Panc1 (cell line): ENCODE measurements at regions of chr11 and their contacts with region 1.

Region 1: DNA sequence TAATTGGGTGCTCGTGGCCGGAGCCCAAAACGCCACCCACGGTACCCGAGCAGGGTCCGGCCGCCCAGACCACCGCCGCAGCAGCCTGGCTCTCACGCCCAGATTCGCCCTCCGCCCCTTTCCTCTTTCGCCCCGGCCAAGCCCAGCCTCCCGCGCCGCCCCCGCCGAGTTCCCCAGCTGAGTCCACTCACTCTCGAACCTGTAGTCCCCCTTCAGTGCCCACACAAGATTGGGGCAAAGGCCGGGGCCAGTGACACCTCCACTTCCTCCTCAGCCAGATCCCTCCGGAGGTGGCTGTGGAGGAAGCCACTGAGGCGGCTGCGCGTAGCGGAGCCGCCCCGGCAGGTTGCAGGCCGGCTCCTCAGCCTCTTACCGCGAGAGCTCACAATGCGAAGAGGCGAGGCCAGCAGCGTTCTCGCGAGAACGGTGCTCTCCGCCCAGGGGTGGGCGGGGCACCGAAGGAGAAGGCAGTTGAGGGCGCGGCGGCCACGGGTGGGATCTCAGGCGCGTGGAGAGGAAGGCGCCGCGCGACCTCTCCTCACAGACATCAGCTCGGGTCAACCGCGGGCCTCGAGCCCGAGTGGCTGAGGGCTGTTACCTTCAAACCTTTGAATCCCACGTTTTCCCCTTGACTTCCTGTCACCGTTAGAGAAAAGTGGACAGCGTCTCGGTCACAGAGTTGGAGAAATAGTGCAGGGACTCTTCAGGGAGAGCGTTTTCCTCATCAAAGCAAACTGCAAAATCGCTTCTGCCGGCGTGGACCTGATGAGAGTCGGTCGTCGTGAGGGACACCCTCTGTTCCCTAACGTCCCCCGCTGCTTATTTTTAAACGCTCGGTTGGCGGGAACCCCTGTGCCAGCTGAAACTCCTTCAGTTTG is at the start of gene BTBD10:
- DNase-seq: peak; percentile 80
- ATAC-seq: peak; percentile 99
- H3K4me3 ChIP-seq: peak within 1 kb of the TSS; percentile 92 to 97
- H3K27ac ChIP-seq: peak within 1 kb of the TSS; percentile 91
- H3K4me1 ChIP-seq: peaks cover 9% of the 10 kb centered on the region
- H3K27me3 ChIP-seq: no peaks in the 10 kb centered on the region
- CTCF ChIP-seq: no peak
- total RNA-seq, gene BTBD10: 29.6 TPM

Region 2: DNA sequence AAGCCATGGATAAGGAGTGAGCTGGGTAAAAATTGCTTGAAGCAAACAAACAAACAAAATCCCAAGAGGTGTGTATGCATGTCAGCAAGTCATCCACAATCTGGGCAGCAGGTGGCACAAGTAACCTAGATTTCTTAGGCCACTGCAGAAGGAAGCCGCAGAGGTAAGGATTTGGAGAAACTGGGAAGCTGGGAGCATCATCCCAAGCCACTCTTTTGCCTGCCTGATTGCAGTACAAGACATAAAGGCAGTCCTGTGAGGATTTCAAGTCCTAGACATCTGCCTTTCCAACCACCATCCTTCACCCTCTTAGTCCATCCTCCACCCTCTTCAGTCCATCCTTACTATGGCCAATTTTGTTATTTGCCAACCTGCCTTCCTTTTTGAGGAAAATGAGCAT is 252.7 kb before region 1 on chr11:
- CTCF ChIA-PET with region 1: no interaction called
- POLR2A ChIA-PET with region 1: no interaction called
- in situ Hi-C with region 1: no loop called
- intact Hi-C with region 1: loop called (anchors 5 kb)
- DNase-seq: peak; percentile 71
- ATAC-seq: peak; percentile 91
- H3K4me3 ChIP-seq: no peak overlapping the region
- H3K27ac ChIP-seq: no peak overlapping the region
- H3K4me1 ChIP-seq: no peaks in the 10 kb centered on the region
- H3K27me3 ChIP-seq: no peaks in the 10 kb centered on the region
- CTCF ChIP-seq: peak; percentile 77

Region 3: DNA sequence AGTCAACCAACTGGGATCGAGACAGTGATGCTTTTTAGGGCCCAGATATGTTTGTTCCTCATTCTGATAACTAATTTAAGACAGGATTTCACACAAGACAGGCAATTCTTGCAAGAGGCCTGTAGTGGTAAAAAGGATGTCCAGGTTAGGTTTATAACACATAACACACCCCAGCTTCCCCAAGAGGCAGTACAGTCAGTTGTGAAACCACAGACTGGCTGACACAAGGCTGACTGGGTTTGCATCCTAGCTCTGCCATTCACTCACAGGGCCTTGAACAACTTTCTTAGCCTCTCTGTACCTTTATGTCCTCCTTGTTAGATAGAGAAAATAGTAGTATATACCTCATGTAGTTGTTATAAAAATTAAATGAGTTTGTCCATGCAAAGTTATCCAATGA is 87.6 kb after region 1 on chr11:
- CTCF ChIA-PET with region 1: interaction called, 10 read pairs
- POLR2A ChIA-PET with region 1: no interaction called
- in situ Hi-C with region 1: no loop called
- intact Hi-C with region 1: no loop called
- DNase-seq: no peak
- ATAC-seq: no peak
- H3K4me3 ChIP-seq: no peak overlapping the region
- H3K27ac ChIP-seq: no peak overlapping the region
- H3K4me1 ChIP-seq: no peaks in the 10 kb centered on the region
- H3K27me3 ChIP-seq: no peaks in the 10 kb centered on the region
- CTCF ChIP-seq: no peak

Region 4: GRCh38 chr11:13620063-13620462 is 156.9 kb after region 1 on chr11:
- CTCF ChIA-PET with region 1: no interaction called
- POLR2A ChIA-PET with region 1: no interaction called
- in situ Hi-C with region 1: no loop called
- intact Hi-C with region 1: no loop called
- DNase-seq: no peak
- ATAC-seq: no peak
- H3K4me3 ChIP-seq: no peak overlapping the region
- H3K27ac ChIP-seq: no peak overlapping the region
- H3K4me1 ChIP-seq: no peaks in the 10 kb centered on the region
- H3K27me3 ChIP-seq: no peaks in the 10 kb centered on the region
- CTCF ChIP-seq: no peak

Region 5: DNA sequence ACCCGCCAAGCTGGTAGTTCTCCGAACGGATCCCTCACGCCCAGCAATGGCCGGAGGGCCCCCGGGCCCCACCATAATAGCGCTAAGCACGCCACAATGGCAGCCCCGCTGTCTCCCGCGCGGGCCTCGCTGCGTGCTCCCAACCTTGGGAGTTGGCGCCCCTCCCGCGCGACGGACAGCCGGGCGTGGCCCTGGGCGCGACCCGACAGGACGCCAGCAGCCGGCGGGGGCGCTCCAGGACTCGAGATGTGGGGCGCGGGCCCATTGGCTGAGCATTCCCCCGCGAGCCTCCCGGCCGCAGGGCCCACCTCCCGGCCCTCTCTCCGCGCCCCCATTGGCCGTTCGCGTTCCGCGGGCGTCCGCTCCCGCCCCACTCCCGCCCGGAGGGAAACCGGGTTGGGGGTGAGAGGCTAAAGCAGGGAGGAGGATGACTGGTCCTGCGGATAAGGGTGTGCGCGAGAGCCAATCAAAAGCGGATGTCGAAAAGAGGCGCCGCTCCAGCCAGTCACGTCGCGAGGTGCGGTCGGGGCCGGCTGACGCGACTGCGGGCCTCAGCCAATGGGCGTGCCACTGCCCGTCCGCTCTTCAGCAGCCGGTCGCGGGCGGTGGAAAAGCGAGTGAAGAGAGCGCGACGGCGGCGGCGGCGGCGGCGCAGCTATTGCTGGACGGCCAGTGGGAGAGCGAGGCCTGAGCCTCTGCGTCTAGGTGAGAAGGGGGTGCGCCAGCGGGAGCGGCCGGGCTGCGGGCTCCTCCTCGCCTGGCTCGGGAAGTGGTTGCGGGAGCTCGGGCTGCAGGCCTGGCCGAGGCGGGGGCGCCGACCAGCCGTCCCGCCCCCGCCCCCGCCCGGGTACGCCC is 205.2 kb after region 1 on chr11 and contains the start of gene FAR1:
- CTCF ChIA-PET with region 1: no interaction called
- POLR2A ChIA-PET with region 1: no interaction called
- in situ Hi-C with region 1: no loop called
- intact Hi-C with region 1: loop called (anchors 10 kb)
- DNase-seq: peak; percentile 91
- ATAC-seq: peak; percentile 96
- H3K4me3 ChIP-seq: peak within 1 kb of the TSS; percentile 87 to 89
- H3K27ac ChIP-seq: peak within 1 kb of the TSS; percentile 88
- H3K4me1 ChIP-seq: peaks cover 4% of the 10 kb centered on the region
- H3K27me3 ChIP-seq: peaks cover 8% of the 10 kb centered on the region
- CTCF ChIP-seq: peak; percentile 85
- total RNA-seq, gene FAR1: 60.4 TPM